ENCODE measurements at regions of chr15 and their contacts with region 1.

Region 1: DNA sequence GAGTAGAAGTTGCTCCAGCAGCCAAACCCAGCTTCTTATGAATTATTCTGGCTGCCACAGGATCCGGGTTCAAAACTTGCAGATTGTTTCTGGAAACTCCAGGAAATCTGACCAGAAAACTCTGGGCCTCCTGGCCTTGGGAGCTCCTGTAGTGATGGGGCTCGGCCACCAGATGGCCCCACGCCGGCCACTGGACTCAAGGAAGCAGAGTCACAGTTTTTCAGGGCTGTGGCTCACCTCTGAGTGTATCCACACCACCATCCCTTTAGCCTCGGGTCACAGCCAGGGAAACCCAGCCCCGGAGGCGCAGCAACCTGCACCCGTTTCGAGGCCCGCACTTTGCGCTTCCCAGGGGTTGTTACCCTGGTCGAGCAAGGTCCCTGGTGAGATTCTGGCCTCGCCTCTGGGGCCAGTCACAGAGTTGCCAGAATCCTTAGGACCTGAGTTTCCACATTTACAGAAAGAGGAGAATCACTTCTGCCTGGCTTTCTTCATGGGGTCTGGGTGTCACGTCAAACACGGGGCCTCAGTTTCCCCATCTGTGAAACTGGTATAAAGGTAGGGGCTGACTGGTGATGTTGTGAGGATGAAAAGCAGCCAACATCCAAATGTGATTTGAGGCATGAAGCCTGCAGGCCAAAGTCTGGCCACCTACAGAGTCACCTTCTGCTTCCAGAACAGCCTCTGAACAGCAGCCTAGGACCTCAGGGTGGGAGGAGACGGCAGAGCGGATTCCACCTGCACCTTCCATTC is 53.5 kb upstream of the LCTL start:
- DNase-seq: no peak
- H3K4me3 ChIP-seq: no peak overlapping the region
- CTCF ChIP-seq: peak; percentile 93

Region 2: DNA sequence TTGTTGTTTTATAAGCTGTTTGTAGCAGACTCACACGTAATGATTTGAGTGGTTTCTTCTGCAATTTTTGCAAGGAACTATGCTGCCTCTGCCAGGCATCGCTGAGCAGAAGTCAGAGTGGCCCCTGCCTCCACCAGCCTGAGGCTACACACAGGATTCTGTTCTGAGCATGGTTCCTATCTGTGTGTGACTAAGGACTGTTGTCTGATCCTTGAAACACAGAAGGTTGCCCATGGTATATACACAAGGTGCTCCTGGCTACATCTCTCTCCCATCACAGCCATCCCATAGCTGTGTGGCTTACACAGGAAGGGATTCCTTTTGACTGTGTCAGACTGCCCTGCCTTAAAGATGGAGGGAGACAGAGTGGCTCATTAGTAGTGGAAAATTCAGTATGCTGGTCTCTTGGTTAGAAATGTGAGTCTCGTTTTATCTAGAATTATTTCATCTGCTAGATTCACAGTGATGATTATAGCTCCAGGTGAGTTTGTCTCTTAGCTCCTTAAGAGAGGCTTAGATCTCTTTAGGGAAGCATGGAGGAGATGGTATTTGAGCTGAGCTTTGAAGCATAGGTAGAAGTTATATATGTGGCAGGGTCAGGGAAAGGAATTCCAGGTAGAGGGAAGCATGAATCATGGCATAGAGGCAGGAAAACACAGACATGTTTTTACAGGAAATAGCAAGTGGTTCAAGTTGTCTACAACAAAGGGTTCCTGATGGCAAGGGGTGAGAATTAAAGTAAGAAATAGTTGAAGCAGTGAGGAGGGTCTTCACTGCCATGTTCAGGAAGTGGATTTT is 159.3 kb before region 1 on chr15:
- CTCF ChIA-PET with region 1: no interaction called
- POLR2A ChIA-PET with region 1: no interaction called
- DNase-seq: no peak
- H3K4me3 ChIP-seq: no peak overlapping the region
- CTCF ChIP-seq: no peak

Region 3: DNA sequence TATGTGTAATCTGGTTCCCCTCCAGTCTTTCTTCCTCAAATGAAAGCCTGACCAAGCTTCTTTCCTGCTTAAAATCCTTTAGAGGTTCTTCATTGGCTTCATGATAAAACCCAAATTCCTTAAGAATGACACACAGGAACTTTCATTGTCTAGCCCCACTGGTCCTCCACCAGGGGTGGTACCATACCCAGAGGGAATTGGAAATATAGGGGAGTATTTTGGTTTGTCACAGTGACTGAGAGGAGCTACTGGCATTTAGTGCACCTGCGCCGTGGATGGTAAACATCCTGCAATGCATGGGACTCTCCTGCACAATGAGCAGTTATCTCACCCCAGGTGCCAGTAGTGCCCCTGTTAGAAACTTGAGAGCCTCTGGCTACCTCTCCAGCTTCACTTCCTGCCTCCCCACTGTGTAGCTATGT is 103.4 kb before region 1 on chr15:
- CTCF ChIA-PET with region 1: no interaction called
- POLR2A ChIA-PET with region 1: no interaction called
- DNase-seq: no peak
- H3K4me3 ChIP-seq: no peak overlapping the region
- CTCF ChIP-seq: no peak

Region 4: GRCh38 chr15:66603301-66604179 is 15.8 kb before region 1 on chr15:
- CTCF ChIA-PET with region 1: interaction called, 175 read pairs
- POLR2A ChIA-PET with region 1: no interaction called
- DNase-seq: no peak
- H3K4me3 ChIP-seq: no peak overlapping the region
- CTCF ChIP-seq: peak; percentile 80

Region 5: DNA sequence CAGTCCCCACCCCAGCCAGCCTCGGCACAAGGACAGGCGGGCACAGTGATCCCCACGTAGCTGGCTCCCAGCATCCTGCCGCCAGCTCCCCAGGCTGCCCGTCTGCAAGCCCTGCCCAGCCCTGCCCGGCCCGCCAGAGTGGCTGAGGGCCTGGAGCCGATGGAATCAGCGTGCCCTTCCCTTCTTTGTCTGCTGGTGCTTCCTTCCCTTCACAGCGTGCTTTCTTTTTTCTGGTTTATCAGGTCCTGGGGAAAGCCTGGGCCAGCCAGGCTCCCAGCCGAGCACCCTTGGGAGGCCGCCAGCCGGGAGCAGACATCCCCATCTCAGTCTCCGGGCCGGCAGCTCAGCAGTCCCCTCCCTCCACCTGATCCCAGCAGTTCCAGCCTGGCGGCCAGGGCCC is 28.0 kb after region 1 on chr15:
- CTCF ChIA-PET with region 1: interaction called, 15 read pairs
- POLR2A ChIA-PET with region 1: no interaction called
- DNase-seq: no peak
- H3K4me3 ChIP-seq: no peak overlapping the region
- CTCF ChIP-seq: no peak

Region 6: GRCh38 chr15:66700802-66701421 is 81.6 kb after region 1 on chr15:
- CTCF ChIA-PET with region 1: interaction called, 48 read pairs
- POLR2A ChIA-PET with region 1: interaction called, 4 read pairs
- DNase-seq: peak; percentile 62
- H3K4me3 ChIP-seq: peak overlapping the region; percentile 69
- CTCF ChIP-seq: no peak

Region 7: GRCh38 chr15:66774001-66774814 is 154.9 kb after region 1 on chr15:
- CTCF ChIA-PET with region 1: interaction called, 66 read pairs
- POLR2A ChIA-PET with region 1: no interaction called
- DNase-seq: no peak
- H3K4me3 ChIP-seq: no peak overlapping the region
- CTCF ChIP-seq: peak; percentile 99

Region 8: GRCh38 chr15:66862878-66863335 is 243.6 kb after region 1 on chr15:
- CTCF ChIA-PET with region 1: interaction called, 28 read pairs
- POLR2A ChIA-PET with region 1: no interaction called
- DNase-seq: peak; percentile 38
- H3K4me3 ChIP-seq: no peak overlapping the region
- CTCF ChIP-seq: peak; percentile 95

Measured in AG04449 (cell line).